K562 (cell line): ENCODE measurements at regions of chr5 and their contacts with region 1.

Region 1: GRCh38 chr5:129094087-129094923 is at the start of gene ISOC1:
- DNase-seq: peak; percentile 93 to 94 (median 93)
- ATAC-seq: peak; percentile 91
- H3K4me3 ChIP-seq: peak within 1 kb of the TSS; percentile 81
- H3K27ac ChIP-seq: peak within 1 kb of the TSS; percentile 80
- H3K4me1 ChIP-seq: peaks cover 12 to 32% of the 10 kb centered on the region in 2 experiments
- H3K27me3 ChIP-seq: no peaks in the 10 kb centered on the region
- CTCF ChIP-seq: peak; percentile 28 to 48 (median 35); a peak in 3 of 6 replicates
- EP300 ChIP-seq: no peak
- POLR2A ChIP-seq: peak; percentile 79
- RAD21 ChIP-seq: peak; percentile 59 to 66
- polyA plus RNA-seq, gene ISOC1: 14.0 to 20.7 TPM

Region 2: GRCh38 chr5:127536687-127537086 is 1557.6 kb before region 1 on chr5:
- CTCF ChIA-PET with region 1: no interaction called
- POLR2A ChIA-PET with region 1: no interaction called
- in situ Hi-C with region 1: loop called (anchors 25 kb)
- intact Hi-C with region 1: no loop called
- DNase-seq: peak in 2 of 4 experiments; percentile 14 to 15
- ATAC-seq: no peak
- H3K4me3 ChIP-seq: no peak overlapping the region
- H3K27ac ChIP-seq: no peak overlapping the region
- H3K4me1 ChIP-seq: no peaks in the 10 kb centered on the region
- H3K27me3 ChIP-seq: no peaks in the 10 kb centered on the region
- CTCF ChIP-seq: peak in 1 of 3 experiments; percentile 36; a peak in 2 of 6 replicates
- EP300 ChIP-seq: no peak
- POLR2A ChIP-seq: no peak
- RAD21 ChIP-seq: no peak

Region 3: DNA sequence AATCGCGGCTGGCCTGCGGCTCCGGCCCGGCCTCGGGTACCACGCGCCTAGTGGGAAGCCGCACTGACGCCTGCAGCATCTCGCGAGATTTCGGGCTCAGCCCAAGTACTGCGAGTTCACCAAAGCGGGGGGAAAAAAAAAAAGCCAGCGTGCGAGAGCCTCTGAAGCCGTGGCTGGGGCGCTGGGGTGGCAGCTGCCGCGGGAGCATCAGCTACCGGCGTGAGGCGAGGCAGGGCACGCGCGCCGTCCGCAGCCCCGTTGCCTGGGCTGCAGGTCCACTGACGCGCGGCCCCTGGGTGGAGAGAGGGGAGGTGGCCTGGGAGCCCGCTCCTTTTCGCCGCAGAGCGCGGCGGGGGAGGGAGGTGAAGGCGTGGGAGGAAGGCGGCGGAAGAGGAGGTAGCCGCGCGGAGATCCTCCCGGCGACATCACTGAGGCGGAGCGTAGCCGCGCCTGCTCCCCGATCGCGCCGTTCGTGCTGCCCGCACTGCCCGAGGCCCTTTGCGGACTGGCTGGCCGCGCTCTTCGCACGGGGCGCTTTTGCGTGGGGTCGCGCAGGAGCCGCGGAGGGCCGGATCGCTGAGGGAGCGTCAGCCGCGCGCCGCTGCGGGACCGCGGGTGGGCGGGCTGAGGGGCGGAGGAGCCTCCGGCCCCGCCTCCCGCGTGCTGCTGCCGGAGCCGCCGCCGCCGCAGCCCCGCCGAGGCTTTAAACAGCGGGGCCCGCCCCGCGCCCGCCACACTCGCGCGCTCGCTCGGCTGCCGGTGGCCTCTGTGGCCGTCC is 1011.1 kb before region 1 on chr5 and contains the start of gene SLC12A2:
- CTCF ChIA-PET with region 1: no interaction called
- POLR2A ChIA-PET with region 1: no interaction called
- in situ Hi-C with region 1: no loop called
- intact Hi-C with region 1: loop called (anchors 5 kb)
- DNase-seq: peak; percentile 81 to 94 (median 85)
- ATAC-seq: peak; percentile 82
- H3K4me3 ChIP-seq: peak within 1 kb of the TSS; percentile 80
- H3K27ac ChIP-seq: peak within 1 kb of the TSS; percentile 89
- H3K4me1 ChIP-seq: peaks cover 17 to 20% of the 10 kb centered on the region in 2 experiments; a peak in 4 of 5 replicates
- H3K27me3 ChIP-seq: no peaks in the 10 kb centered on the region
- CTCF ChIP-seq: peak in 1 of 3 experiments; percentile 13; a peak in 1 of 6 replicates
- EP300 ChIP-seq: no peak
- POLR2A ChIP-seq: peak; percentile 84
- RAD21 ChIP-seq: no peak
- polyA plus RNA-seq, gene SLC12A2: 5.3 to 5.4 TPM

Region 4: GRCh38 chr5:129019401-129019908 is 74.8 kb before region 1 on chr5:
- CTCF ChIA-PET with region 1: no interaction called
- POLR2A ChIA-PET with region 1: no interaction called
- in situ Hi-C with region 1: no loop called
- intact Hi-C with region 1: no loop called
- DNase-seq: no peak
- ATAC-seq: no peak
- H3K4me3 ChIP-seq: no peak overlapping the region
- H3K27ac ChIP-seq: no peak overlapping the region
- H3K4me1 ChIP-seq: no peaks in the 10 kb centered on the region
- H3K27me3 ChIP-seq: no peaks in the 10 kb centered on the region
- CTCF ChIP-seq: no peak
- EP300 ChIP-seq: no peak
- POLR2A ChIP-seq: no peak
- RAD21 ChIP-seq: no peak

Region 5: GRCh38 chr5:129074903-129075302 is 19.4 kb before region 1 on chr5:
- CTCF ChIA-PET with region 1: no interaction called
- POLR2A ChIA-PET with region 1: interaction called, 4 read pairs
- in situ Hi-C with region 1: no loop called
- intact Hi-C with region 1: loop called (anchors 2 kb)
- DNase-seq: no peak
- ATAC-seq: no peak
- H3K4me3 ChIP-seq: no peak overlapping the region
- H3K27ac ChIP-seq: no peak overlapping the region
- H3K4me1 ChIP-seq: peaks cover 0 to 21% of the 10 kb centered on the region in 2 experiments; a peak in 3 of 5 replicates
- H3K27me3 ChIP-seq: no peaks in the 10 kb centered on the region
- CTCF ChIP-seq: no peak
- EP300 ChIP-seq: no peak
- POLR2A ChIP-seq: no peak
- RAD21 ChIP-seq: no peak